ENCODE measurements at regions of chr4 and their contacts with region 1.

Region 1: DNA sequence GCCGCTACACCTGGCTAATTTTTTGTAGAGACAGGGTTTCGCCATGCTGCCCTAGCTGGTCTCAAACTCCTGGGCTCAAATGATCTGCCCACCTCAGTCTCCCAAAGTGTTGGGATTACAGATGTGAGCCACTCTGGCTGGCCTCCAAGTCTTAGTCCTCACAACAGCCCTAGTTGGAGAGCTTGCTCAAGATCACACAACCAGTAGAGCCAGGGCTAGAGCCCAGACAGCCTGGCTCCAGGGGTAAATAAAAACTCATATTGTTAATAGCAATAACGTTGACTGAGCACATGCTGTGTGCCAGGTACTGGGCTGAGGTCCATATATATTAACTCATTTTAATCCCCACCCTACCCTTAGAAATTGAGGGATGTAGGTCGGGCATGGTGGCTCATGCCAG is 7.3 kb upstream of the JAKMIP1 start:
- DNase-seq: peak in 1 of 2 donors; percentile 5
- H3K4me3 ChIP-seq: no peak overlapping the region
- CTCF ChIP-seq: no peak
- POLR2A ChIP-seq: no peak

Region 2: GRCh38 chr4:5416637-5417036 is 791.0 kb before region 1 on chr4:
- intact Hi-C with region 1: loop called (anchors 5 kb)
- DNase-seq: no peak
- H3K4me3 ChIP-seq: no peak overlapping the region
- CTCF ChIP-seq: no peak
- POLR2A ChIP-seq: no peak

Region 3: GRCh38 chr4:7004331-7004730 is 796.7 kb after region 1 on chr4:
- intact Hi-C with region 1: no loop called
- DNase-seq: no peak
- H3K4me3 ChIP-seq: no peak overlapping the region
- CTCF ChIP-seq: no peak
- POLR2A ChIP-seq: no peak

Region 4: DNA sequence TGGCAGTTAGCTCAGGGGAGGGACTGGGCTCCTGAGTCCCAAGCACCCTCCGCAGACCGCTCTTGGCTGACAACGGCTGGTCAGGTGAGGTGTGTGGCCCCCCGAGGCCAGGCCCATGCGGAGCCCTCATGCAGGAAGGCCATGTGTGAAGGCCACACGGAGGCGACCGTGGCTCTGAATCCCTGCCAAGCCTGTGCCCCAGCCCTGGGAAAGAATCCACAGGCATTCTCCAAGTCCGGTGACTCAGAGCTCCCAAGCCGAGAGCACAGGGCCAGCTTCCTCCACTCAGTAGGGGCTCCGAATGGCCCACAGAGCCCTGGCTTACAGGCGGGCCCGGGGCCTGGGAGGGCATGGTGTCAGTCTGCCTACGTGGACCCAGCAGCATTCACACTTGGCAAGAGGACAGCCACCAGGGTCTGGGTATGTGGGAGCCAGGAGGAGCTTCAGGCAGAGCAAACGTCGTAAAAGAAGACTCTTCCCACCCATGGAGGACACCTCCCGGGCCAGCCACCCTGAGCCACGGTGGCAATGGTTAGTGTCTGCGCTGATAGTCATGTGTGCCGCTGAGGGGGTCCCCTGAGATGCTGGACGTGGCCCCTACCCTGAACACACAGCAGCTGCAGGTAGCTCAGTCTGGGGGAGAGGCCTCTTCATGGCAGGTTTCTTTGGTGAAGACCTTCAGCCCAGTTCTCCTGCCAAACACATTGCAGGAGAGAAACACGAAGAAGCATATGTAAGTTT is 1121.5 kb after region 1 on chr4:
- intact Hi-C with region 1: loop called (anchors 5 kb)
- DNase-seq: no peak
- H3K4me3 ChIP-seq: no peak overlapping the region
- CTCF ChIP-seq: no peak
- POLR2A ChIP-seq: no peak

Measured in lower leg skin (tissue), 4 donors.